ENCODE measurements at regions of chr5 and their contacts with region 1.

Region 1: GRCh38 chr5:32709781-32710549 is 1.2 kb upstream of the NPR3 start:
- DNase-seq: peak; percentile 85
- H3K4me3 ChIP-seq: peak overlapping the region; percentile 56 to 68 (median 59)
- H3K27ac ChIP-seq: peak overlapping the region in 3 of 4 donors; percentile 81 to 82 (median 81)
- H3K4me1 ChIP-seq: peaks cover 0 to 47% (median 29%) of the 10 kb centered on the region in 4 donors
- H3K27me3 ChIP-seq: peaks cover 5 to 26% (median 10%) of the 10 kb centered on the region in 3 donors
- CTCF ChIP-seq: peak; percentile 48 to 73 (median 58)
- EP300 ChIP-seq: no peak
- POLR2A ChIP-seq: no peak

Region 2: DNA sequence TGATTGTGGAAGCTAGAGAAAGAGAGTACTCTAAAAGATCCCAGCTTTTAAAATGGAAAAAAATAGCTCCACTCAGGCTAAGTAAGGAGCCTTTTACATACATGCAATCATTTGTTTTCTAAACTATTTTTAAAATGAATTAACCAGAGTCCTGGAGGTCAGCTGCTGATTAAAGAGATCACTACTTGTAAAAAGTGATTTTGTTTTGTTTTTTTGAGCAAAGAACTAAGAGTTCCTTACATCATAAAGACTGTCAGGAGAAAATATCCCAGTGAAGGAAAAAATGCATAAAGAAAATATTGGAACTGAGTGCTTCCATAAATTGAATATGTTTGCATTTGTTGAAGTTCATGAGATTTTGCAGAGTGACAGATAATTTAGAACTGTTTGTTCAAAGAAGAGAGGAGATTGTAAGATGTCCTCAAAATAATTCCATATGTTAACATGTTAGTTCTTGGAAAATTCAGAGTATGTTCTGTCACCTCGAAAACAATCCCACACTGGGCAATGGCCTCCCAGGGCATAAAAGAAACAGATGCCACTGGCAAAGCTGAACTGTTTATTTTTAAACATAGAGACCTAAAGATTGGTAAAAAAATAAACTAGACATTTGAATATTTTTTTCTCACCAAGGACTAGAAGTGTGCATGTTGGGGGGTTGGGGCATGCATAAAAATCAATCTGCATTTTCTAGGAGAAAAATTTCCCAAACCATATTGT is 265.9 kb after region 1 on chr5:
- intact Hi-C with region 1: loop called (anchors 5 kb)
- DNase-seq: no peak
- H3K4me3 ChIP-seq: no peak overlapping the region
- H3K27ac ChIP-seq: peak overlapping the region in 3 of 4 donors; percentile 30 to 46 (median 36)
- H3K4me1 ChIP-seq: peaks cover 0 to 36% (median 29%) of the 10 kb centered on the region in 4 donors
- H3K27me3 ChIP-seq: no peaks in the 10 kb centered on the region
- CTCF ChIP-seq: no peak
- EP300 ChIP-seq: no peak
- POLR2A ChIP-seq: no peak

Region 3: GRCh38 chr5:33032271-33033070 is 322.5 kb after region 1 on chr5:
- intact Hi-C with region 1: loop called (anchors 10 kb)
- DNase-seq: no peak
- H3K4me3 ChIP-seq: no peak overlapping the region
- H3K27ac ChIP-seq: peak overlapping the region in 3 of 4 donors; percentile 34 to 46 (median 37)
- H3K4me1 ChIP-seq: peaks cover 2 to 23% (median 18%) of the 10 kb centered on the region in 4 donors
- H3K27me3 ChIP-seq: no peaks in the 10 kb centered on the region
- CTCF ChIP-seq: no peak
- EP300 ChIP-seq: no peak
- POLR2A ChIP-seq: no peak

Region 4: DNA sequence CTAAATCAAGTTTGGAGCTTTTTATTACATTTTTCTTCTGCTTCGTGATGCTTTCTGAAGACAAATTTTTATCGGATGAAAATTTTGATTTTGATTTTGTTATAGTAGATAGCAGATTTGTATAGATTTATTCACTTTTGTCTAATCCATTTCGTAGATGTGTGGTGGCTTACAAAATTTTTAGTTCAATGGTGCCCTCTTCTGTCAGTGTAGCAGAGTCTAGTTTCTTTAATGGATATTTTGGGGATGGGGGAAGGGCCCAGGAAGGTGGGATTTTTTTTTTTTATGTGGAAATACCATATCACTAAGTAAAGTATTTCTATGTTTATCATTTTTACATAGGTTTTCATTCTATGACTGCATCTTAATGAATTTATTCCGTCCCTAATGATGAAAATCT is 470.9 kb after region 1 on chr5:
- intact Hi-C with region 1: loop called (anchors 1 kb)
- DNase-seq: no peak
- H3K4me3 ChIP-seq: no peak overlapping the region
- H3K27ac ChIP-seq: no peak overlapping the region
- H3K4me1 ChIP-seq: no peaks in the 10 kb centered on the region
- H3K27me3 ChIP-seq: no peaks in the 10 kb centered on the region
- CTCF ChIP-seq: peak in 1 of 4 experiments; percentile 43
- EP300 ChIP-seq: no peak
- POLR2A ChIP-seq: no peak

Region 5: GRCh38 chr5:33299621-33300208 is 589.8 kb after region 1 on chr5:
- intact Hi-C with region 1: loop called (anchors 1 kb)
- DNase-seq: no peak
- H3K4me3 ChIP-seq: no peak overlapping the region
- H3K27ac ChIP-seq: peak overlapping the region in 3 of 4 donors; percentile 62 to 66 (median 65)
- H3K4me1 ChIP-seq: peaks cover 0 to 36% (median 18%) of the 10 kb centered on the region in 4 donors
- H3K27me3 ChIP-seq: no peaks in the 10 kb centered on the region
- CTCF ChIP-seq: peak; percentile 13 to 41 (median 32)
- EP300 ChIP-seq: peak in 1 of 4 donors; percentile 48
- POLR2A ChIP-seq: no peak

Region 6: GRCh38 chr5:33423018-33423630 is 713.2 kb after region 1 on chr5:
- intact Hi-C with region 1: loop called (anchors 2 kb)
- DNase-seq: no peak
- H3K4me3 ChIP-seq: no peak overlapping the region
- H3K27ac ChIP-seq: no peak overlapping the region
- H3K4me1 ChIP-seq: peaks cover 0 to 18% (median 0%) of the 10 kb centered on the region in 4 donors
- H3K27me3 ChIP-seq: no peaks in the 10 kb centered on the region
- CTCF ChIP-seq: peak; percentile 12 to 49 (median 26)
- EP300 ChIP-seq: no peak
- POLR2A ChIP-seq: no peak

Measured in sigmoid colon (tissue), 7 donors.